IMR-90 (cell line): ENCODE measurements at regions of chr2 and their contacts with region 1.

Region 1: DNA sequence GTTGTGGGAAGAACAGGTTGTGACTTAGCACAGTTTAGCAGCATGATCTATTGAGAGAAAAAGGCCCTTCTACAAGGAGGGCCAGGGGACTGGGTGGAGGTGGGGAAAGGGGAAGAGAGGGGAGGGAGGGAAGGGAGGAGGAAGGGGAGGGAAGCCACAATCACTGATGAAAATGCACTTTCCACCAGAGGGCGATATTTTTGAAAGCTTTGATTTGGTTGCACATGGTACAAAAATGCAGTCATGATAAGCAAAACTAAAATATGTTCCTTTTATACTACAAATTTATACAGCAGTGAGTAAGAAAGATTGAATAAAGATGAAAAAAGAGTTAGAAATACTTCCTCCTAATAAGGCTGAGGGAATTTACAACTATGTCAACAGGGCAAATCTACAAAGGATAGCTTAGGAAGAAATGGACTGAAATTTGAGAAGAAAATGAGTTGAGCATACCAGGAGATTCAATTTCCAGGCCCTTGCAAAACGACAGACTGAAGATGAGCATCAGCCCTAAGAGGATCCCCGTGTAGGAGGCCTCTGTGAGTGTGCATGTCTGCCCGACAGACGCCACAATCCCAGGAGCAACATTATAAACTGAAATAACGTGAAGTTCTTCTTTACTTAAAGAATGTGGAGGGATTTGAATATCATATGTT is 17.2 kb downstream of the SH3YL1 start:
- DNase-seq: peak; percentile 85
- ATAC-seq: peak; percentile 94
- H3K4me3 ChIP-seq: no peak overlapping the region
- H3K27ac ChIP-seq: peak overlapping the region; percentile 87; the same call in 1 of the 2 replicates
- H3K4me1 ChIP-seq: no peaks in the 10 kb centered on the region; the same call in 1 of the 2 replicates
- H3K27me3 ChIP-seq: no peaks in the 10 kb centered on the region
- CTCF ChIP-seq: peak; percentile 74
- POLR2A ChIP-seq: no peak
- RAD21 ChIP-seq: peak; percentile 55

Region 2: GRCh38 chr2:264660-265468 is 18.2 kb after region 1 on chr2 and contains the start of gene ACP1:
- CTCF ChIA-PET with region 1: interaction called, 5 read pairs
- POLR2A ChIA-PET with region 1: no interaction called
- dilution Hi-C with region 1: no loop called
- in situ Hi-C with region 1: no loop called
- intact Hi-C with region 1: loop called (anchors 1 kb)
- DNase-seq: peak; percentile 93
- ATAC-seq: peak; percentile 86
- H3K4me3 ChIP-seq: peak within 1 kb of the TSS; percentile 98
- H3K27ac ChIP-seq: peak within 1 kb of the TSS; percentile 95
- H3K4me1 ChIP-seq: peaks cover 12% of the 10 kb centered on the region
- H3K27me3 ChIP-seq: no peaks in the 10 kb centered on the region
- CTCF ChIP-seq: 0 out of 2 replicates have a peak, but pooled peaks have one; percentile 2
- POLR2A ChIP-seq: peak; percentile 89
- RAD21 ChIP-seq: no peak
- total RNA-seq, gene ACP1: 85.7 and 123 TPM in 2 replicates

Region 3: GRCh38 chr2:290090-290722 is 43.6 kb after region 1 on chr2:
- CTCF ChIA-PET with region 1: interaction called, 9 read pairs
- POLR2A ChIA-PET with region 1: no interaction called
- dilution Hi-C with region 1: no loop called
- in situ Hi-C with region 1: no loop called
- intact Hi-C with region 1: loop called (anchors 1 kb)
- DNase-seq: peak; percentile 78
- ATAC-seq: peak; percentile 83
- H3K4me3 ChIP-seq: peak overlapping the region; percentile 50
- H3K27ac ChIP-seq: no peak overlapping the region
- H3K4me1 ChIP-seq: peaks cover 7% of the 10 kb centered on the region
- H3K27me3 ChIP-seq: peaks cover 24% of the 10 kb centered on the region
- CTCF ChIP-seq: peak; percentile 91
- POLR2A ChIP-seq: no peak
- RAD21 ChIP-seq: peak; percentile 89

Region 4: GRCh38 chr2:636641-637405 is 390.2 kb after region 1 on chr2:
- CTCF ChIA-PET with region 1: no interaction called
- POLR2A ChIA-PET with region 1: no interaction called
- dilution Hi-C with region 1: no loop called
- in situ Hi-C with region 1: no loop called
- intact Hi-C with region 1: no loop called
- DNase-seq: peak; percentile 31
- ATAC-seq: peak; percentile 77
- H3K4me3 ChIP-seq: no peak overlapping the region
- H3K27ac ChIP-seq: no peak overlapping the region
- H3K4me1 ChIP-seq: no peaks in the 10 kb centered on the region
- H3K27me3 ChIP-seq: no peaks in the 10 kb centered on the region
- CTCF ChIP-seq: peak; percentile 70
- POLR2A ChIP-seq: no peak
- RAD21 ChIP-seq: peak; percentile 51

Region 5: GRCh38 chr2:667332-667999 is 420.8 kb after region 1 on chr2:
- CTCF ChIA-PET with region 1: no interaction called
- POLR2A ChIA-PET with region 1: no interaction called
- dilution Hi-C with region 1: no loop called
- in situ Hi-C with region 1: loop called (anchors 10 kb)
- intact Hi-C with region 1: no loop called
- DNase-seq: peak; percentile 85
- ATAC-seq: peak; percentile 90
- H3K4me3 ChIP-seq: no peak overlapping the region
- H3K27ac ChIP-seq: no peak overlapping the region
- H3K4me1 ChIP-seq: peaks cover 4% of the 10 kb centered on the region
- H3K27me3 ChIP-seq: no peaks in the 10 kb centered on the region
- CTCF ChIP-seq: peak; percentile 73
- POLR2A ChIP-seq: no peak
- RAD21 ChIP-seq: peak; percentile 69

Region 6: DNA sequence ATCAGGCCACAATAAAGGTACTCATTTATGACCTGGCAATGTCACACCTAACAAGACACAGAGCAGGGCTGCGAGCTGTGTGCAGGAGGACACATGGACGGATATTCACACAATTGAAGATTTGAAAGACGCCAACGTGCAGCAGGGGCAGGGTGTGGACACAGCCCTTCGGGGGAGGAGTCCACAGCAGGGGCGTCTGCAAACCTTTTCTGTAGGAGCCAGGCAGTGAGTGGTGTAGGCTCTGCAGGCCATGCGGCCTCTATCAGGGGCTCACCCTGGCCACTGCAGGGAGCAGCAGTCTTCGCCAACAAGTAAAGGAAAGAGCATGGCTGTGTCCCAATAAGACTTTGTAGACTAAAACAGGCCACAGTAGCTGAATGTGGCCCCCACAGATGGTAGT is 578.3 kb after region 1 on chr2:
- CTCF ChIA-PET with region 1: no interaction called
- POLR2A ChIA-PET with region 1: no interaction called
- dilution Hi-C with region 1: no loop called
- in situ Hi-C with region 1: no loop called
- intact Hi-C with region 1: no loop called
- DNase-seq: no peak
- ATAC-seq: no peak
- H3K4me3 ChIP-seq: no peak overlapping the region
- H3K27ac ChIP-seq: no peak overlapping the region
- H3K4me1 ChIP-seq: no peaks in the 10 kb centered on the region
- H3K27me3 ChIP-seq: no peaks in the 10 kb centered on the region
- CTCF ChIP-seq: no peak
- POLR2A ChIP-seq: no peak
- RAD21 ChIP-seq: no peak